PC-9 (cell line): ENCODE measurements at regions of chr18 and their contacts with region 1.

Region 1: DNA sequence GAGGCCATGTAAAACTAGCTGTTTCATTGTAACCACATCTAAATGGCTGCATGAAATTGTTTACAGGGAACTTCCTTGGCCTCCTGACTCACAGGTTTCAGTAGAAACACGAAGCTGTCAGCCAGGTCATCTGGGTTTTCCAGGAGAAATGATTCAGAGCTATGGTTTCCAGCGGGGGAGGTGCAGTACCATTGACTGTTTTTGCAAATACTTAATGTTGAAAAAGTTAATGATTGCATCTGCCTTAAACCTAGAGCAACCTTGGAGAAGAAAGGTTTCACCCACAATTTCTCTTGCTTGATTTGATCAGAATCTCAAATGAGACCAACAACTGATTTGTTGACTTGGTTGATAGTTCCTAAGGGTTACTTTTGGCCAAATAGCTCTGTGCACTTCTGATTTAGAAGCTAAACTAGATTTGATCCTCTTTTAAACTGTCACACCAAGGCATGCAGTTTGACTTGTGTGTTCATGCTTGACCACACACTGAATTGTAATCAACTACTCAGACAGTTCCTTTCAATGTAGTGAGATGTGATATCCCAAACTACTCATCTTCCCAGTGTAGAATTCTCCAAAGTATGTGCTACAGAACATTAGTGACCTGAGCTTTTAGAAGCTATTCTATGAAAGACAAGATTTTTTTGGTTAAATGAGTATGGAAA is 193.5 kb upstream of the CHST9 start:
- DNase-seq: peak; percentile 55 to 79
- H3K4me3 ChIP-seq: no peak overlapping the region
- H3K27ac ChIP-seq: peak overlapping the region; percentile 75
- H3K4me1 ChIP-seq: peaks cover 19% of the 10 kb centered on the region; the same call in 1 of the 2 replicates
- H3K27me3 ChIP-seq: no peaks in the 10 kb centered on the region
- CTCF ChIP-seq: no peak

Region 2: DNA sequence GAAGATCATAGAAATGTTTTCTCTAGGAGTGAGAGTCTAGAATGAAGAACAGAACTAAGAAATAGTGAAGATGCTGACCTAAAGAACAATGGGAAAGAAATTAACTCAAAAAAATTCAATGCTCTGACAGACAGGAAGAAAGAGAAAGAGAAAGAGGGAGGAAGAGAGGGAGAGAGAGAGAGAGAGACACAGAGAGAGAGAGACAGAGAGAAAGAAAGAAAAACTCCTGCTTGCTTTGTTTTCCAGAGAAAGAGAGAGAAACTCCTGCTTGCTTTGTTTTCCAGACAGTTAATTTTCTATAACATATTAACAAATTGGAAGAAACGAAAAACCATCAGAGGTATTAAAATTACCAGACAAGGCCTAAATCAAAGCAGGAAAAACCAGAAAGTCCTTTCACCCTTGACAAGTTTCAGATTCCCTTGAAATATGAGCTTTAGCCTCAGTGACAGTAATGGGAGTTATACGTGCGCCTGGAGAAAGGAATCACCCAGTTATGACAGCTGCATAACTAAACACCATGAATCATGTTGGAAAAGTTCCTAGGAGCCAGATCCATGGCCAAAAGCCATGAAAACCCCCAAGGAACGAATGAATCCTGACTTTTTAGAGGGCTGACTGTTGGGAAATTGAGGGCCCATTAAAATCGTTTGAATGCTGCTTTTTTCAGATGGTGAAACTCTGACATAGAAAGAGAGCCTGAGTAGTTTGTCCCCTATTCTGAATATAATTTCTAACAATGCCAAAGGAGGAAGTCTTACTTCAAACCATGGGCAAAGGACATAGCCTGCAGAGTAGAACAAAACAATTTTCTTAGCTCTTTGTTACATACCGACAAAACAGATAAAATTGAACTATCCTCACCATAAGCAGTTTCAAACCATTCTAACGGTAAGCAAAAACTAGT is 35.2 kb after region 1 on chr18:
- CTCF ChIA-PET with region 1: no interaction called
- POLR2A ChIA-PET with region 1: interaction called, 7 read pairs
- intact Hi-C with region 1: loop called (anchors 1 kb)
- DNase-seq: peak; percentile 30 to 84
- H3K4me3 ChIP-seq: no peak overlapping the region
- H3K27ac ChIP-seq: peak overlapping the region; percentile 54
- H3K4me1 ChIP-seq: peaks cover 19% of the 10 kb centered on the region
- H3K27me3 ChIP-seq: no peaks in the 10 kb centered on the region
- CTCF ChIP-seq: no peak

Region 3: GRCh38 chr18:28834889-28835288 is 1456.3 kb after region 1 on chr18:
- CTCF ChIA-PET with region 1: no interaction called
- POLR2A ChIA-PET with region 1: no interaction called
- intact Hi-C with region 1: loop called (anchors 10 kb)
- DNase-seq: peak; percentile 22 to 73
- H3K4me3 ChIP-seq: no peak overlapping the region
- H3K27ac ChIP-seq: 0 out of 2 replicates have a peak overlapping the region, but pooled peaks have one; percentile 19
- H3K4me1 ChIP-seq: peaks cover 8% of the 10 kb centered on the region; the same call in 1 of the 2 replicates
- H3K27me3 ChIP-seq: no peaks in the 10 kb centered on the region
- CTCF ChIP-seq: no peak

Region 4: DNA sequence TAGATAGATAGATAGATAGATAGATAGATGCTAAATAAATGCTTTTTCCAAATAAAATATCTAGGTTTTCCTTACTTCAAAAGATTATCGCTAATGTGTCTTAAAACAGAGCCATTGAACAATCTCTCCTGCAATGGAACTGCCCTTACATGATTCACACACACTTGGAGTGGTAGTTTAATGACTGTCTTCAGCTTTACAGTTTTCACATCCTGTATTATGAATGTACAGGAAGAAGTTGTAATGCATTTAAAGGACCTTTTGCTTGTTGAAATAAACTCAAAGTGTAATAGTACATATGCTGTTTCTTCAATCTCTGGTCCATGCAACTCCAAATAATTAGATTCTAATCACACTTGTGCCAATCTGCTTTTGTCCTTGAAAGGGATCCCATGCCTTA is 1595.9 kb after region 1 on chr18:
- CTCF ChIA-PET with region 1: no interaction called
- POLR2A ChIA-PET with region 1: no interaction called
- intact Hi-C with region 1: no loop called
- DNase-seq: no peak
- H3K4me3 ChIP-seq: no peak overlapping the region
- H3K27ac ChIP-seq: no peak overlapping the region
- H3K4me1 ChIP-seq: no peaks in the 10 kb centered on the region
- H3K27me3 ChIP-seq: no peaks in the 10 kb centered on the region
- CTCF ChIP-seq: no peak